Vagina (tissue), 2 donors: ENCODE measurements at regions of chr1 and their contacts with region 1.

Region 1: DNA sequence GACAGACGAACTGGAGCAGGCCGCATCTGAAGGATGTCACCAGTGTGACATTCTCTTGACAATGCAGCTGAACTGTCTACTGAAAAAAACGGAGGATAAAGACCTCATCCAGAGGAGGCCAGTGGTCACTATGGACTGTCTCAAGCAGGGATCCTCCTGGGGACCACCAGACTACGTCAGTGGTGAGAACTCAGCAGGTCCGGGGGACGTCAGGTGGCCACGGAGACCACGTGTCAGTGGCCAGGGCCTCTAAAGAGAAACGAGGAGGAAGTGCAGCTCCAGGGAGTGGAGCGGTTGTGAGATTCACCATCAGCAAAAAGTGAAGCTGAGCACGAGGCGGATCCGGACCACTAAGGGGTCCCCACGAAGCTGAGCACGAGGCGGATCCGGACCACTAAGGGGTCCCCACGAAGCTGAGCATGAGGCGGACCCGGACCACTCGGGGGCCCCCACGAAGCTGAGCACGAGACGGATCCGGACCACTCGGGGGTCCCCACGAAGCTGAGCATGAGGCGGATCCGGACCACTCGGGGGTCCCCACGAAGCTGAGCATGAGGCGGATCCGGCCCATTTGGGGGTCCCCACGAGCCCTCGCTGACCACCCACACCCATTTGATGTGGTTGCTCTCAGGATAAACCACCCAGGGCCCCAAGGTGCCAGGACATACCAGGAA is 13.5 kb upstream of the TMEM240 start:
- DNase-seq: no peak
- H3K4me3 ChIP-seq: no peak overlapping the region
- H3K27ac ChIP-seq: no peak overlapping the region
- H3K4me1 ChIP-seq: peaks cover 12% of the 10 kb centered on the region
- H3K27me3 ChIP-seq: no peaks in the 10 kb centered on the region
- CTCF ChIP-seq: no peak
- POLR2A ChIP-seq: no peak

Region 2: DNA sequence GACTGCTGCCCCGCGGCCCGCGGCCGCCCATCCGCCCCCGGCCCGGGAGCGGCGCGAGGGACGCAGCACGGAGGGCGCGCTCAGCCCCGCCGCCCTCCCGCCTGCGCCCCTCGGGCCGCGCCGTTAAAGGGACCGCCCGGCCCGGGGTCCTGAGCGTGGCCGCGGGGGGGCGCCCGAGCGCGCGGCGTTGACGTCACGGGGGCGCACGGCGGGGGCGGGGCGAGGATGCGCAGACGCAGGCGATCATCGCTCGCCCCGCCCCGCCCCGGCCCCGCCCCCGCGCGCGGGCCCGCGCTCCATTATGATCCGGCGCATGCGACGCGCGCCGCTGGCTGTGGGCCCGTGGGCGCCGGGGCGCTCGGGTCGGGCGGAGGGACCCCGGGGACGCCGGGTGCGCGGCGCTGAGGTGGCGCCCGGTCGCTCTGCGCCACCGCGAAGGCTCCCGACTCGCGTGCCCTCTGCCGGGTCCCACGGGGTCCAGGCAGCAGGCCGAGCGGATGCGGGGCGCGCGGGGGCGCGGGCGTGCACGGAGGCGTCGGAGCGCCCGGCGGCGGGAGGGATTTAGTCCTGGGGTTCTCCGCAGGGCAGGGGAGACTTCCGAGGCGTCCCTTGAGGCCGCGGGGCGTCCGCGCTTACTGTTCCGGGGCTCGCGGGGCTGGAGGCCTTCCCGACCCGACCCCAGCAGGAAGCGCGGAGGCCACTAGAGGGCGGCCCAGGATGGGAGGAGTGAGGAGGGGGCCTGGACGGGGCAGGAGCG is 204.5 kb before region 1 on chr1 and contains the start of gene DVL1:
- intact Hi-C with region 1: no loop called
- DNase-seq: no peak
- H3K4me3 ChIP-seq: peak within 1 kb of the TSS; percentile 71 to 97
- H3K27ac ChIP-seq: peak within 1 kb of the TSS; percentile 95
- H3K4me1 ChIP-seq: peaks cover 72% of the 10 kb centered on the region
- H3K27me3 ChIP-seq: no peaks in the 10 kb centered on the region
- CTCF ChIP-seq: peak in 1 of 3 experiments; percentile 60
- POLR2A ChIP-seq: peak in 1 of 2 donors; percentile 47
- total RNA-seq, gene DVL1: 72.4 TPM

Region 3: DNA sequence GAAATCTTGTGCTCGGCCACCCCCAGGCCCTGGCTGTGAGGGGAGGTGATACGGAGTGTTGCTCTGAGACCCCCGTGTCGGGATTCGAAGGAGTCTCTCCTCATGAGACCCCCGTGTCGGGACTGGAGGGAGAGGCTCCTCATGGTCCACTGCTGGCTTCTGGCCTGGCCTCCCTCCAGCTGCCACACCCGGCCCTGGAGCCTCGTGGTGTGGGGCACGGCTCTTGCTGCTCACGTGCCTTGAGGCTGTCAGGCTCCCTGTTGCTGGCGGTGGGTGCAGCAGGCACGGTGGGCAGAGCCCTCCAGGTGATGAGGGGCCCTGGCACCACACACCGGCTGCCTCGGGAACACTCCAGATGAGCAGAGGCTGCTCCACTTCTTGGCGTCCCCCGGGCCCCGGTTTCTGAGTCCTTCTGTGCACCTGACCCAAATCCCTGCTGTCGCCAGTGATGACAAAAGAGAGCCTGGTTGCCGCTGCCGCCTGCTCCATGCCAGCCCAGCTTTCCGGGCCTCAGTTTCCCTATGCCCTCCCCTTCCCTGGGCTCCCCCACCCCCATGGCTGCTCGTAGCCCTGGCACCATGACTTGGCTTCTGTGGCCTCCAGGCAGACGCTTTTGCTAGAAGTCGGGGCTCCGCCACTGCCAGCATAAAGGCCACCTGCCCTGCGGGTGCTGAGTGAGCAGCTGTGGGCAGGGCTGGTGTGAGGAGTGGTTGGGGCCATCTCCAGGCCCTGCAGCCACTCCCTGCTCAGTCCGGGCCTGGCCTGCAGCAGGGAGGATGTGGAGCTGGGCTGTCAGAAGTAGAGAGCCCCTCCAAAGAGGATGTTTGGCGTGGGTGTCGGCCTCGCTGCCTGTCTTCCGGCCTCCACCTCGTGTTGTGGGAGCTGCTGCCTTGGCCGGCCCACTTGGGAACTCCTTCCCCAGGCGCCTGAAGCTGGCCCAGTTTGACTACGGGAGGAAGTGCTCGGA is 25.4 kb before region 1 on chr1:
- intact Hi-C with region 1: loop called (anchors 1 kb)
- DNase-seq: no peak
- H3K4me3 ChIP-seq: no peak overlapping the region
- H3K27ac ChIP-seq: no peak overlapping the region
- H3K4me1 ChIP-seq: no peaks in the 10 kb centered on the region
- H3K27me3 ChIP-seq: no peaks in the 10 kb centered on the region
- CTCF ChIP-seq: no peak
- POLR2A ChIP-seq: no peak

Region 4: DNA sequence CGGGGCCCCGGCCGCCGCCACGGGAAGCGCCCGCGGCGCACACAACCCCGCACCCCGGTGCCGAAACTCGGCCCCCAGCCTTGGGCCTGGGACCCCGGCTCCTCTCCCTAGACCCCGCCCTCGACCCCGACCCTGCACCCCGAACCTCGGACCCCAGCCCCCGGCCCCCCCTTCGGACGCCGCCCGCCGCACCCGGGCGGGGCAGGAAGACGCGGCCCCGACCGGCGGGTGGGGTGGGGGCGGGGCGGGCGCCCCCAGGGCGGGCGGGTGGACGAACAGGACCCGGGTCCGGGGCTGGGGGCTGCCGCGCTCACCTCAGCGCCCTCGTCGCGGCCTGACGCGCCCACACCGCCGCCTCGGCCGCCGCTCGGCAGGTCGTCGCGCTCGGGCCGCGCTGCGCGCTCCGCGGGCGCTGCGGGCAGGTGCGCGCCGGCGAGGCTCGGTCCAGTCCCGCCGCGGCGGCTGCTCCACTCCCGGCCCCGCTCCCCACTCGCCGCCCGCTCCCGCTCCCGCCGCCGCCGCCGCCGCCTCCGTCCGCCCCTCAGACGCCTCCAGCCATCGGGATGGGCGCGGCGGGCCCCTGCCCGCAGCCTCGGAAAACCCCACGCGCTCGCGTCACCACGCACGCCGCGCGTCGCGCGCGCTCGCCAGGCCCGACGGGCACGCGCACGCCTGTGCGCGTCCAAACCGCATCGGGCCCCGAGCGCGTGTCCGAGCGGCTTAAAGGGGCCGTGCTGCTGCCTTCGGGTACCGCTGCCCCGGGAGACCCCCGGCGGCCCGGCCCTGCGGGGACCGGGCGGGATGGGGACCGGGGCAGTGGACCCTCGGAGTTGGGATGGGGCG is 336.8 kb after region 1 on chr1 and contains the start of gene GNB1:
- intact Hi-C with region 1: no loop called
- DNase-seq: no peak
- H3K4me3 ChIP-seq: peak within 1 kb of the TSS; percentile 86 to 92
- H3K27ac ChIP-seq: peak within 1 kb of the TSS; percentile 94
- H3K4me1 ChIP-seq: peaks cover 79% of the 10 kb centered on the region
- H3K27me3 ChIP-seq: no peaks in the 10 kb centered on the region
- CTCF ChIP-seq: no peak
- POLR2A ChIP-seq: peak in 1 of 2 donors; percentile 64
- total RNA-seq, gene GNB1: 159 TPM